ENCODE measurements at regions of chr2 and their contacts with region 1.

Region 1: DNA sequence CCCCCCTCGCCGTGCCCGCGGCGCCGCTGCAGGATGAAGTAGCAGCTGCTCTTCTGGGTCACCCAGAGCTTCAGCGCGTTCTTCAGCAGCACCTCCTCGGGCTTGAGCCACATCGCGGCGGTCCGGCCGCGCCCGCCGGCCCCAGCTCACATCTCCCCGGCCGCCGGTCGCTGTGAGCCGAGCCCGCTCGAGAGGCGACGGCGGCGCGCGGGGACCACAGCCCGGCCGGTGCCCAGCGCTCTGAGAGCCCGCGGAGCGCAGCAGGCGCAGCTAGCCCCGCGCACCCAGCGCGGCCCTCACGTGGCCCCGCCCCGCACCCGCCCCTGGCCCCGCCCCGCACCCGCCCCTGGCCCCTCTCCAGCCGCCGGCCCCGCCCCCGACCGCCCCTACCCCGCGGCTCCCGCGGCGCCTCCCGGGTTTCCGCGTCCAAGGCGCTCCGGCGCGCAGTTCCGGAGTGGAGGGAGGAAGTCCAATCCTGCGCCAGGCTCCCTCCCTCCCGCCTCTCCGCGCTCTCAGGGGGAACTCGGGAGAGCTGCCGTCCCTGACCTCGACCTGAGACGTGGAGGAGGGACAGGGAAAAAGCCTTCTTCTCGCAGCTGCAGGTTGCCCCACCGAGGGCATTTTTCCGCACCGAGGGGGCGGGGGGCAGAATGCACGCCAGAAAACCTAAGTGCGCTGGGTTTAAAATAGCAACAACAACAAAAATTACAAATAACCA is at the start of gene TBC1D8:
- DNase-seq: peak; percentile 51 to 80 (median 68)
- H3K4me3 ChIP-seq: peak within 1 kb of the TSS; percentile 74 to 89 (median 80)
- H3K4me3 Mint-ChIP-seq: peak within 1 kb of the TSS; percentile 91 to 97
- H3K27ac ChIP-seq: peak within 1 kb of the TSS; percentile 49 to 51
- H3K27ac Mint-ChIP-seq: peak within 1 kb of the TSS; percentile 54 to 91 (median 85)
- H3K4me1 ChIP-seq: peaks cover 26 to 43% of the 10 kb centered on the region in 2 donors
- H3K4me1 Mint-ChIP-seq: peaks cover 52% of the 10 kb centered on the region
- H3K27me3 ChIP-seq: no peaks in the 10 kb centered on the region
- H3K27me3 Mint-ChIP-seq: peaks cover 5 to 11% (median 11%) of the 10 kb centered on the region in 3 donors
- CTCF ChIP-seq: no peak
- polyA plus RNA-seq, gene TBC1D8: 16.1 to 78.0 (median 22.4) TPM

Region 2: GRCh38 chr2:101012706-101013181 is 138.6 kb before region 1 on chr2:
- intact Hi-C with region 1: loop called (anchors 5 kb)
- DNase-seq: peak; percentile 32 to 47 (median 34)
- H3K4me3 ChIP-seq: no peak overlapping the region
- H3K4me3 Mint-ChIP-seq: no peak overlapping the region
- H3K27ac ChIP-seq: no peak overlapping the region
- H3K27ac Mint-ChIP-seq: peak overlapping the region in 1 of 7 donors; percentile 37
- H3K4me1 ChIP-seq: no peaks in the 10 kb centered on the region
- H3K4me1 Mint-ChIP-seq: peaks cover 3% of the 10 kb centered on the region
- H3K27me3 ChIP-seq: no peaks in the 10 kb centered on the region
- H3K27me3 Mint-ChIP-seq: no peaks in the 10 kb centered on the region
- CTCF ChIP-seq: peak; percentile 90

Region 3: DNA sequence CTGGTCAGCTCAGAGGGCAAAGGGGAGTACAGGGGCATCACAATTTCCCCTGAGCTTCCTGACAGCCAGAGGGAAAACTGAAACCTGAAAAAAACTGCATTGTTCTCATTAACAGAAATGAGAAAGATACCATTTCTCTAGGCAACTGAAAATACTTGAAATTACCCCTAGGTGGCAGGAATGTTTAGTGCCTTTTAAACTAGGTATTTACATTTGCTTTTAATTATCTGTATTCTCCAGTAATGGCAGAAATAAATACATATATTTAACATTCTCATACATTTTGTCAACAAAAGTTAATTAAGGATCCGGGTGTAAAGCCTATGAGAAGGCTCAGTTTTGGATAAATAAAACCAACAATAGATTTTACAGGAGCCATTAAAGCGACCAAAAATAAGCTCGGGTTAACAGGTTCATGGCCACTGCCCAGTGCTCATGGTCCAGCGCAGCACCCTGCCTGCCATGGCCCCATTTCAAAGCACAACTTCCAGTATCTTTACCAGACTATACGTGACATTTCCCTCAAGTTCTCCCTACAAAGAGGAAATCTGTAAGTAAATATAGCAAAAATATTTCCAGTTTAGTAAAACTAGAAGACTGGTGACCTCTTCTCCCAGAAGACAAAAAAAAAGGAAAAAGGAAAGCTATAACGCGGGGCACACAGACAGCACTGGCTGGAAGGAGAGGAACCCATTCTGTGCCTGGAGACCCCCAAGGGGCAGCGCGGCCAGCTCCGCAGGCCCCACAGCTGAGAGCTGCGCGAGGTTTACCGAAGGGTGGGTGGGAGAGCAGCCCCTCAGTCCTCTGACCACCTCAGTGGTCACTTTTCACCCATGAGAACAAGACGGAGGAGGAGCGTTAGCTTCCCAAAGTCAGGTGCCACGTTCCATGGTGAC is 114.5 kb before region 1 on chr2:
- intact Hi-C with region 1: loop called in 1 of 2 experiments (anchors 5 kb)
- DNase-seq: peak in 1 of 3 donors; percentile 17
- H3K4me3 ChIP-seq: no peak overlapping the region
- H3K4me3 Mint-ChIP-seq: no peak overlapping the region
- H3K27ac ChIP-seq: no peak overlapping the region
- H3K27ac Mint-ChIP-seq: peak overlapping the region in 1 of 7 donors; percentile 54
- H3K4me1 ChIP-seq: peaks cover 35 to 38% of the 10 kb centered on the region in 2 donors
- H3K4me1 Mint-ChIP-seq: peaks cover 40% of the 10 kb centered on the region
- H3K27me3 ChIP-seq: no peaks in the 10 kb centered on the region
- H3K27me3 Mint-ChIP-seq: peaks cover 0 to 2% (median 0%) of the 10 kb centered on the region in 3 donors
- CTCF ChIP-seq: peak; percentile 64

Region 4: GRCh38 chr2:101119431-101119830 is 31.9 kb before region 1 on chr2:
- intact Hi-C with region 1: loop called in 1 of 2 experiments (anchors 5 kb)
- DNase-seq: peak; percentile 32 to 76 (median 37)
- H3K4me3 ChIP-seq: no peak overlapping the region
- H3K4me3 Mint-ChIP-seq: no peak overlapping the region
- H3K27ac ChIP-seq: no peak overlapping the region
- H3K27ac Mint-ChIP-seq: peak overlapping the region in 4 of 7 donors; percentile 17 to 74 (median 36)
- H3K4me1 ChIP-seq: peaks cover 49 to 75% of the 10 kb centered on the region in 2 donors
- H3K4me1 Mint-ChIP-seq: peaks cover 77% of the 10 kb centered on the region
- H3K27me3 ChIP-seq: no peaks in the 10 kb centered on the region
- H3K27me3 Mint-ChIP-seq: peaks cover 0 to 2% (median 0%) of the 10 kb centered on the region in 3 donors
- CTCF ChIP-seq: no peak

Region 5: GRCh38 chr2:101205521-101205998 is 54.3 kb after region 1 on chr2:
- intact Hi-C with region 1: loop called (anchors 5 to 10 kb)
- DNase-seq: peak; percentile 60 to 78 (median 76)
- H3K4me3 ChIP-seq: peak overlapping the region in 2 of 3 experiments; percentile 14 to 68
- H3K4me3 Mint-ChIP-seq: peak overlapping the region; percentile 34 to 75
- H3K27ac ChIP-seq: peak overlapping the region in 1 of 2 donors; percentile 48
- H3K27ac Mint-ChIP-seq: peak overlapping the region in 2 of 7 donors; percentile 41 to 46
- H3K4me1 ChIP-seq: peaks cover 14 to 22% of the 10 kb centered on the region in 2 donors
- H3K4me1 Mint-ChIP-seq: peaks cover 25% of the 10 kb centered on the region
- H3K27me3 ChIP-seq: no peaks in the 10 kb centered on the region
- H3K27me3 Mint-ChIP-seq: peaks cover 0 to 4% (median 2%) of the 10 kb centered on the region in 3 donors
- CTCF ChIP-seq: peak; percentile 61

Region 6: GRCh38 chr2:101252408-101253012 is 101.2 kb after region 1 on chr2 and contains the start of gene CNOT11:
- intact Hi-C with region 1: loop called in 1 of 2 experiments (anchors 10 kb)
- DNase-seq: peak; percentile 97 to 99 (median 98)
- H3K4me3 ChIP-seq: peak within 1 kb of the TSS; percentile 53 to 88 (median 77)
- H3K4me3 Mint-ChIP-seq: peak within 1 kb of the TSS; percentile 96
- H3K27ac ChIP-seq: peak within 1 kb of the TSS; percentile 71 to 95
- H3K27ac Mint-ChIP-seq: peak within 1 kb of the TSS; percentile 74 to 94 (median 92)
- H3K4me1 ChIP-seq: peaks cover 28 to 42% of the 10 kb centered on the region in 2 donors
- H3K4me1 Mint-ChIP-seq: peaks cover 44% of the 10 kb centered on the region
- H3K27me3 ChIP-seq: no peaks in the 10 kb centered on the region
- H3K27me3 Mint-ChIP-seq: no peaks in the 10 kb centered on the region
- CTCF ChIP-seq: no peak
- polyA plus RNA-seq, gene CNOT11: 38.2 to 39.0 (median 38.4) TPM

Region 7: GRCh38 chr2:101442042-101442666 is 290.9 kb after region 1 on chr2:
- intact Hi-C with region 1: no loop called
- DNase-seq: peak; percentile 64 to 86 (median 84)
- H3K4me3 ChIP-seq: no peak overlapping the region
- H3K4me3 Mint-ChIP-seq: peak overlapping the region in 1 of 2 donors; percentile 13
- H3K27ac ChIP-seq: no peak overlapping the region
- H3K27ac Mint-ChIP-seq: peak overlapping the region in 4 of 7 donors; percentile 27 to 61 (median 53)
- H3K4me1 ChIP-seq: peaks cover 19 to 28% of the 10 kb centered on the region in 2 donors
- H3K4me1 Mint-ChIP-seq: peaks cover 35% of the 10 kb centered on the region
- H3K27me3 ChIP-seq: no peaks in the 10 kb centered on the region
- H3K27me3 Mint-ChIP-seq: peaks cover 3 to 17% (median 8%) of the 10 kb centered on the region in 3 donors
- CTCF ChIP-seq: no peak